Activated CD4-positive, alpha-beta memory T cell treated with anti-CD3 and anti-CD28 coated beads for 36 hours (primary cell): ENCODE measurements at regions of chr2 and their contacts with region 1.

Region 1: DNA sequence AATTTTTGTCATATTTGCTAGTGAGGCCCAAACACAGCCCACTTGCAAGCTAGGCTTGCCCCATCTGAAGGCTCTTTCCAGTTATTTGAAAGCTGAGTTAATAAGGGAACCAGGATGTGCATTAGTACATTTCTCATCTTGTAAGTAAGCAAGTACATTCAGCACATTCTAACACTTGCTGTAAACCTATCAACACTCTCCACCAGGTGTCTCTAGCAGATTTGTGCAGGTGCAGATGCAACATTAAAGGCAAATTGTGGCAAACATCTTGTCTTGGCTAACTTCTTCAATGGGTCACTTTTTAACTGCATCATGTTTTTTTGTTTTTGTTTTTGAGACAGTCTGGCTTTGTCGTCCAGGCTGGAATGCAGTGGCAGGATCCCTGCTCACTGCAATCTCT is 25.3 kb upstream of the MFSD6 start:
- DNase-seq: no peak
- H3K4me3 Mint-ChIP-seq: no peak overlapping the region
- H3K27ac Mint-ChIP-seq: no peak overlapping the region
- H3K4me1 Mint-ChIP-seq: peaks cover 4% of the 10 kb centered on the region
- H3K27me3 Mint-ChIP-seq: no peaks in the 10 kb centered on the region

Region 2: GRCh38 chr2:190511104-190511503 is 128.3 kb after region 1 on chr2:
- CTCF ChIA-PET with region 1: interaction called, 4 read pairs
- POLR2A ChIA-PET with region 1: no interaction called
- intact Hi-C with region 1: loop called (anchors 1 kb)
- DNase-seq: no peak
- H3K4me3 Mint-ChIP-seq: no peak overlapping the region
- H3K27ac Mint-ChIP-seq: no peak overlapping the region
- H3K4me1 Mint-ChIP-seq: peaks cover 20% of the 10 kb centered on the region
- H3K27me3 Mint-ChIP-seq: no peaks in the 10 kb centered on the region